Prostate gland (tissue), 2 donors: ENCODE measurements at regions of chr22 and their contacts with region 1.

Region 1: DNA sequence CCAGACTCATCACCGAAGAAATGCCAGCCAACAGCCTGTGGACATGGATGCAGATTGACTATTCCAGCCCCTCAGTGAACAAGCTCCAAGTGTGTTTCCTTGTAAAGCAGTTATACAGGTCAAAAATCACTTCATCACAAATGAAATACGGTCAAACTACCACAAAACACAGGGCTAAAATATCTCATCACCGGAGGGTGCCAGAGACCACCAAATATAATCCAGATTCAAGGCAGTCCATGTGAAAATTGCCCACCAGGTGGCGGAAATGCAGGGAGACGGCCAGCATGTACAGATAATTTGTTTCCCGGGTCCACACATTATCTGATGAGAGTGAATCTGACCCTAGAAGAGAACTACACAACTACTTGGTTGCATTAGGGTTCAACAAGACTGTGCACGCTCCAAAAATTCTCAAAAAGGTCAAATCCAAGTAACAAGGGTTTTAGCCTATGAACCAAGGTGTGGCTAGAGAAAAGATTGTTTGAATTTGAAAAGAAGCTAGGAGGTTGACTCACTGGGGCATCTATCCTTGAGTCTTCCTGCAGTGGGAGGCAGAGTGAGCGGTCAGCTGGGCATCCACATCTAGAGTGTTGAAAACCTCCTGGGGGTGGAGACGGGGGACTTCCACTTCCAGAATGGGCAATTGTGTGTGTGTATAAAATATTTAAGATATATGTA is 71.7 kb downstream of the IGLL5 start:
- DNase-seq: peak; percentile 78
- H3K4me3 ChIP-seq: no peak overlapping the region
- H3K27ac ChIP-seq: no peak overlapping the region
- H3K4me1 ChIP-seq: no peaks in the 10 kb centered on the region
- H3K27me3 ChIP-seq: no peaks in the 10 kb centered on the region
- CTCF ChIP-seq: peak; percentile 84 to 97 (median 95)
- POLR2A ChIP-seq: no peak

Region 2: DNA sequence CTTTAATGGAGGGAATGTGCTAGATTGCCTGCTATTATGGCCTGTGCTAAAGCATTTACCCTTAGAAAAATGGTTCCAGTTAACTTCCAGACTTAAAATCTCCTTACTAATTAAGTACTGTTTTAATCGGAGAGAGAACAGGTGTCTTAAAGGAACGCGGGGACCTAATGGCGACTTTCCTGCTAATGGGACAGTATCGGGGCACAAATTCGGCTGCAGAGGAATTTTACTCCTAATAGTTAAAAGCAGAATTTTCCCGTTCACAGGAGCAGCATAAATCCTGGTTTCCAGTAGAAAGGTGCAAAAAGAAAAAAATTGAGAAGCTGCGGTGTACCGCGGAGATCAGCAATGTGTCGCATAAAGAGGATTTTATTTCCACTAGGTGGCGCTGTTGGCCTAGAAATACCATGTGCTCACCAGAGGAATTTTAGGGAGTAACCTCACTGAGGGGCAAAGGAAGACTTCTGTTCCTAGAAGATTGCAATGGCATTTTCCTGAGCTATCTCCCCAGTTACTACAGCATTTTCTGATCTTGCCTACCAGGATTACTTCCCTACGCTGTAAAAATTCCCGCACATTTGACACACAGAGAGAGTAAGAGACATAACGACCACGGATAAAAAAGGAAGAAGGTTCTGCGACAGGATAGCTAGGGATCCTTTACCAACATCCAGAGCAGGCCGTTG is 495.3 kb before region 1 on chr22:
- intact Hi-C with region 1: loop called (anchors 10 kb)
- DNase-seq: peak; percentile 44
- H3K4me3 ChIP-seq: no peak overlapping the region
- H3K27ac ChIP-seq: no peak overlapping the region
- H3K4me1 ChIP-seq: no peaks in the 10 kb centered on the region
- H3K27me3 ChIP-seq: no peaks in the 10 kb centered on the region
- CTCF ChIP-seq: peak; percentile 60 to 94 (median 66)
- POLR2A ChIP-seq: no peak

Region 3: DNA sequence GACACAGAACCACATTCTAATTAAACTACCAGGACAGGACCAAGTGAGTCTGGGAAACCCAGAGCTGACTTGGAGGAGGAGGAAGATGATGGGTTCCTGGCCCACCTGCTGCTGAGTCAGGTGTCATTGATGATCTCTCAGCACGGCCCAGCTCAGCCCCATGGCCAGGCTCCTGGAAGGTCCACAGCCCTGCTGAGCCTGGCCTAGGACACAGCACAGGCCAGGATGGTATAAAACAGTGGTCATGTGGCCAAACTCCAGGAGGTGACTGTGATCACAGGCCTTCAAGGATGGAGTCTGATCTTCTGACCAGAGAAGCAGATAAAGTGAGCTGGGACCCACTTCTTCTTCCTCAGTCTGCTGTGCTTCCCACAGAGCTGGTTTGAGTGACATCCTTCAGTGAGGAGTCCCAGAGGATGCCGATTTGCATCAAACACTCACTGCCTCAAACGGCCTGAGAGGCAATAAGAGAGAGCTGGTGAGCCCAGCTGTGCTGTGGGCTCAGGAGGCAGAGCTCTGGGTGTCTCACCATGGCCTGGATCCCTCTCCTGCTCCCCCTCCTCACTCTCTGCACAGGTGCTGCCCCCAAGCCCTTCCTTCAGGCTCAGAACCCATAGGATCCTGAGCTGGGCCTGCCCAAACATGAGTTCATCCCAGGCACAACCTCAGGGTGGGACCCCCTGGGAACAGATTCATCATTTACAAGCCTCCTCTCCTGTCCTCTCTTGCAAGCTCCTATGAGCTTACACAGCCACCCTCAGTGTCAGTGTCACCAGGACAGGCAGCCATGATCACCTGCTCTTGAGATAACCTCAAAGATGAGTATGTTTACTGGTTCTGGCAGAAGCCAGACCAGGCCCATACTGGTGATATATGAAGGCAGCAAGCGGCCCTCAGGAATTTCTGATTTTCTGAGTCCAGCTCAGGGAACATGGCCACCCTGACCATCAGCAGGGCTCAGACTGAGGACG is 109.4 kb before region 1 on chr22:
- intact Hi-C with region 1: loop called (anchors 5 kb)
- DNase-seq: no peak
- H3K4me3 ChIP-seq: no peak overlapping the region
- H3K27ac ChIP-seq: no peak overlapping the region
- H3K4me1 ChIP-seq: no peaks in the 10 kb centered on the region
- H3K27me3 ChIP-seq: no peaks in the 10 kb centered on the region
- CTCF ChIP-seq: no peak
- POLR2A ChIP-seq: no peak

Region 4: DNA sequence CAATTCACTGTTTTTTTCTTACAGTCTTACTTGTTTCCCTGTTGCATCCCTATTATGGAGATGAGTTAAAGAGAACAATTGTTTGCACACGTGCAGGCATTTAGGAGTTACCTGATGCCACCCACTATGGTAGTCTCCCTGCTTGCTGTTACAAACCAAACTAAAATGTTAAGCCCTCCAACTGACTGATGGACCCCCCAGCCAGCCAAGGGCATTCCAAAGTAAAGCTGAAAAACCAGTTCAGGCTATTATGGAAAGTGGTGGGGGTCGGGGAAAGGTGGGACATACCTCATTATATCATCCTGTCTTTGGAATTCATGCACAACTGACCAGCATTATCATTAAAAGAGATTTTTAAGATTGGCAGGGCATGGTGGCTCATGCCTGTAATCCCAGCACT is 64.0 kb after region 1 on chr22:
- intact Hi-C with region 1: no loop called
- DNase-seq: no peak
- H3K4me3 ChIP-seq: no peak overlapping the region
- H3K27ac ChIP-seq: no peak overlapping the region
- H3K4me1 ChIP-seq: no peaks in the 10 kb centered on the region
- H3K27me3 ChIP-seq: no peaks in the 10 kb centered on the region
- CTCF ChIP-seq: no peak
- POLR2A ChIP-seq: no peak

Region 5: DNA sequence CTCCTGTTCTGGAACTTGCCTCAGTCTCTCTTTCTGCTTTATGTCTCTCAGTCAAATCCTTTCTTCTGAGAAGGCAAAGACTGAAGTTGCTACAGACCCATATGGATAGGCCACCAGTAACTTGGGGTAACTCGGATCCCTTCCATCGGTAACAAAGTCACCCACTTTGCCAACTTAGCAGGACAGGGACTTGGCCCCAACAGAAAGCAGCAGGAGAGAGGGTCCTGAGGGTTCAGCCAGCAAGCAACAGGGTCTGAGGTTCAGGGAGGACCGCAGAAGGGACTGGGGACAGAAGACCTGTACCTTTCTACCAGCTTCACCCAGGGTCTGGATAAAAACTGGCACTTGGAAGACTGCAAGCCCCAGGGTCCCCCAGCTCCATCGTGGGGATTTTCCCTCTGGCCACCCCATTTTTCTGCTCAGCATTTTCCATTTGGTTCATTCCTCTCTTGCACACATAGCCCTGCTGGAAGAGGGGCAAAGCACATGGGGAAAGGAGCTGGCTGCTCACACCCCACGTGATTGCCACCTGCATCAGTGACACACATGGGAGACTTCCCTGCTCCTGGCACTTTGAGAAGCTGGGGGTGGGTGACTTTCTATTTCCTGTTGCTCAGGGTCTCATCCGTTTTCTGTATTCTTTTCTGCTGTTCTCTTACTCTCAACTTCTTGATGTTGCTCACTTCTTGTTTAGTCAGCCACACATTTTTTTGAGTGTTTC is 76.4 kb after region 1 on chr22:
- intact Hi-C with region 1: no loop called
- DNase-seq: no peak
- H3K4me3 ChIP-seq: no peak overlapping the region
- H3K27ac ChIP-seq: no peak overlapping the region
- H3K4me1 ChIP-seq: no peaks in the 10 kb centered on the region
- H3K27me3 ChIP-seq: no peaks in the 10 kb centered on the region
- CTCF ChIP-seq: no peak
- POLR2A ChIP-seq: no peak

Region 6: DNA sequence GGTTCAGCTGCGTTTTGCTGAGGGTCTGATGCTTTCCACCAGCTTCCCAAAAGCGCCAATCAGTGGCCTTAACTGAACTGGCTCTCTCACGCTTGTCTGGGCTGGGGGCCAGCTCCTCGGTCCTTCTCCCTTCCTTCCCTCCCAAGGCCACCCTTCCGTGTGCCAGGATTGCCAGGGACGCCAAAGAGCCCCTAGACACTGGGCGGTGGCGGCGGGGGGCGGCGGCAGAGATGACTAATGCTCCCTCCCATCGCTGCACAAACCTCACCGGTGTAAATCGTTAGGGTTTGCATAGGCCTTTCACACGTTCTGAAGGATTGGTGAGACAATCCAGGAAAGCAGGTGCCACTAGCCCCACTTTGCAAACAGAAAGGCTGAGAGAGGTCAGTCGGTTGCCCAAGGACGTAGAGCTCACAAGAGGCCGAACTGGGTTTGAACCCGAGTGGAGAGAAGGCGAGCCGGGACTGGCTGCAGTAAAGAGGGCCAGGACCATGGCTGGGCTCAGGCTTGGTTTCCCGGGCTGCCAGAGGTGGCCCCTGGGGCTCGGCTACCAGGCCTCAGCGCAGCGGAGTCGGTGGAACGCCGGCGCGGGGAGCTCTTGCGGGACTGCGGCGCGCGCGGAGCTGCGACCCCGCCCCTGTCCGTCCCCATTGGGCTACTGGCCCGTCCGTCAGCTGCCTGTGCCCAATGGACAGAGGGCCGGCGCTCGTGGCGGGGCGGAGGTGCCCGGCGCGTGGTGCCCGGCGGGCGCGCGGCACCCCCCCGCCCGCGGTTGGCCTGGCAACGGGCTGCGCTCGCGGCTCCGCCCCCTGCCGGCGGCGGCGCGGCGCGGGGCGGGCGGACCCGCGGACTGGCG is 110.4 kb after region 1 on chr22:
- intact Hi-C with region 1: no loop called
- DNase-seq: peak; percentile 90
- H3K4me3 ChIP-seq: peak overlapping the region; percentile 38 to 42
- H3K27ac ChIP-seq: peak overlapping the region in 1 of 2 donors; percentile 45
- H3K4me1 ChIP-seq: peaks cover 11% of the 10 kb centered on the region
- H3K27me3 ChIP-seq: no peaks in the 10 kb centered on the region
- CTCF ChIP-seq: no peak
- POLR2A ChIP-seq: peak; percentile 20

Region 7: DNA sequence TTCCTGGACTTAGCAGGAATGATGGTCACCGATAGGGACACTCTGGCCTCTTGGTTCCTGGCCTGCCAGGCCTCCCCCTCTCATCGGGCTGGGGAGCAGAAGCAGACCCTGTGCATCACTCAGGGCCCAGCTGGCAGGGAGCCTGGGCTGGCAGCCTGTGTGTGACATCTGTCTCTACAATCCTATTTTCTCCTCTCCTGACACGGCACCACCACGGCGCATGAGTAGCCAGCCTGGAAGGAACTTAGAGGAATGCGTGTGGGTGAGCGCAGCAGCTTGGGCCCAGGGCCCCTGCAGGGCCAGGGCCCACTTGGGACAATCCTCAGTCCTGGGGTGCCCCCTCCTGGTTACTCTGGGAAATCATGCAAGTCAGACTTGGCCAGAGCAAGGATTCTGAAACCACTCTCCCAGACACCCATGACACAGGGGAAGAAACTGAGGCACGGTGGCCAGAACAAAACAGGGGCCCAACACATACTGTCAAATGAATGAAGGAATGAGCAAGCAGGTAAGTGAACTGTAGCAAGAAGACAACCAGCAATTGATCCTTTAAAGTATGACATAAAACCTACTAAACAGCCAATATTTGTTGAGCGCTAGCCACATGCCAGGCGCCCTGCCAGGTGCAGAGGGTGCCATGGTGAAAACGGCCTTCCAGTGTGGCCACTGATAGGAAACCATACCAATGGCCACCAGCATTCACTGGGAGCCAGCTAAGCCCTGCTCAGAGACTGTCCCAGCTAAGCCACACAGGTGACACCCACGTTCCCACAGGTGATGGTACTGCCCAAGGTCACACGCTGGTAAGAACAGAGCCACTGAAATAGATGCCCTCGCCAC is 169.2 kb after region 1 on chr22:
- intact Hi-C with region 1: loop called (anchors 1 kb)
- DNase-seq: peak; percentile 63
- H3K4me3 ChIP-seq: no peak overlapping the region
- H3K27ac ChIP-seq: no peak overlapping the region
- H3K4me1 ChIP-seq: no peaks in the 10 kb centered on the region
- H3K27me3 ChIP-seq: no peaks in the 10 kb centered on the region
- CTCF ChIP-seq: peak; percentile 66 to 86 (median 82)
- POLR2A ChIP-seq: no peak